Mammary epithelial cell (primary cell): ENCODE measurements at regions of chr5 and their contacts with region 1.

Region 1: GRCh38 chr5:160064995-160065630 is 54.1 kb downstream of the PWWP2A start:
- DNase-seq: peak; percentile 77
- H3K4me3 ChIP-seq: no peak overlapping the region
- H3K27ac ChIP-seq: peak overlapping the region; percentile 40
- H3K4me1 ChIP-seq: peaks cover 19% of the 10 kb centered on the region
- H3K27me3 ChIP-seq: no peaks in the 10 kb centered on the region
- CTCF ChIP-seq: no peak

Region 2: GRCh38 chr5:159230657-159231056 is 834.5 kb before region 1 on chr5:
- CTCF ChIA-PET with region 1: no interaction called
- dilution Hi-C with region 1: no loop called
- in situ Hi-C with region 1: no loop called
- intact Hi-C with region 1: no loop called
- DNase-seq: peak; percentile 53
- H3K4me3 ChIP-seq: no peak overlapping the region
- H3K27ac ChIP-seq: peak overlapping the region; percentile 36
- H3K4me1 ChIP-seq: peaks cover 33% of the 10 kb centered on the region
- H3K27me3 ChIP-seq: no peaks in the 10 kb centered on the region
- CTCF ChIP-seq: no peak

Region 3: GRCh38 chr5:160030631-160031377 is 34.3 kb before region 1 on chr5:
- CTCF ChIA-PET with region 1: no interaction called
- dilution Hi-C with region 1: loop called (anchors 5 kb)
- in situ Hi-C with region 1: no loop called
- intact Hi-C with region 1: no loop called
- DNase-seq: no peak
- H3K4me3 ChIP-seq: no peak overlapping the region
- H3K27ac ChIP-seq: no peak overlapping the region
- H3K4me1 ChIP-seq: no peaks in the 10 kb centered on the region
- H3K27me3 ChIP-seq: no peaks in the 10 kb centered on the region
- CTCF ChIP-seq: no peak

Region 4: DNA sequence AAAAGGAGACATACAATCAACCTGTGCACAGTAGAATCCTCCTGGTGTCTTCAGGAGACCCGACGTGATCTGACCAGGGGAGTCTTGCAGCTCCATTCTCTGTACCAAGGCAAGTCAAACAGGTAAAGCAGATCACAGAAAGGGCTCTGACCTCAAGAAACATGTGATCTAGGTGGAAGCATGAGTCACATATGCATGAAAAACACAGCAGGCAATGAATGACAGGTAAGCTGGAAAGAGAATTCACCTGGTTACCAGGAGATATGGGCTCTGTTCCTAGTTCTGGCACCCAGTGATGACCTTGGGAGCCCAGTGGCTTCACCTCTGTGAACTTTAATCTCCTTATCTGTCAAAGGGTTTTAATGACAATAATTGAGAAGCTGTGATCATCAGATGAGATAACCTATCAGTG is 144.9 kb after region 1 on chr5:
- CTCF ChIA-PET with region 1: no interaction called
- dilution Hi-C with region 1: no loop called
- in situ Hi-C with region 1: no loop called
- intact Hi-C with region 1: no loop called
- DNase-seq: peak; percentile 76
- H3K4me3 ChIP-seq: no peak overlapping the region
- H3K27ac ChIP-seq: no peak overlapping the region
- H3K4me1 ChIP-seq: peaks cover 15% of the 10 kb centered on the region
- H3K27me3 ChIP-seq: no peaks in the 10 kb centered on the region
- CTCF ChIP-seq: no peak